ENCODE measurements at regions of chr17 and their contacts with region 1.

Region 1: DNA sequence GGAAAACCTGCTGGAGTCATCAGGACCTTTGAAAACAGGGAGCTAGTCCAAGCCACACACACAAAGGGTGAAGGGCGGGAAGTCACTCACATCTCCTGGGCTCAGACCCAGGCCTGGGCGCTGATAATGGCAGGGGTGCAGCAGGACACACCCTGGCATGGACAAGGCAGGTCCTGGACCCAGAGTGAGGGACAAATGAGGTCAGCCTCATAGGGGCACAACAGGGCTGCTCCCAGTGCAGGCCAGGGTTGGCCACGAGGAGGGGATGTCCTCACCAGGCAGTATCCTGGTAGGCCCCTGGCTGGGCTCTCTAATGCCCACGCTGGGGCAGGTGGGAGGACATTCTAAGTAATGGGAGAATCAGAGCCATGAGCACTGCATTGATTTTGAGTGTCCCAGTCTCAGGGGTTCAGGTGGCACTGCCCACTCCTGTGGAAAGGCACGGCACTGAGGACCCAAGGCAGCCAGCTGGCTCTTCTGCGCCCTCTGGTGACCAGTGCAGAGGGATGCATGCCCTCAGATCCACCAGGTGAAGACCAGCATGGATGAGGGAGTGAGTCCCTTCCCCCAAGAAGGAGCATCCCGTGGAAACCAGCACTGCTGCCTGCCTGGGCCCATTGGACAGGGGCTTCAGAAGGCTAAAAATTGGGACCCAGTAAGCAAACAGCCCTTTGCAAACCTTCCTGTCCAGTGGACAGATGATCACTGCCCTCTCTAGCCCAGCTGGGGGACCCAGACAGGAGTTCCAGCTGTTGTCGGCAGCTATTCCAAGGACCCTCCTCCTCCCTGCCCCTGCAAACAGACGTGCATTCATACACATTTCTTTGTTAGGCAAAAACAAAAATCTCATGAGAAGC is 23.4 kb upstream of the SREBF1 start:
- DNase-seq: peak; percentile 66 to 97 (median 78)

Region 2: GRCh38 chr17:17812211-17813057 is 47.7 kb before region 1 on chr17:
- intact Hi-C with region 1: loop called (anchors 1 kb)
- DNase-seq: peak in 8 of 10 donors; percentile 62 to 95 (median 76)